HepG2 (cell line): ENCODE measurements at regions of chr17 and their contacts with region 1.

Region 1: DNA sequence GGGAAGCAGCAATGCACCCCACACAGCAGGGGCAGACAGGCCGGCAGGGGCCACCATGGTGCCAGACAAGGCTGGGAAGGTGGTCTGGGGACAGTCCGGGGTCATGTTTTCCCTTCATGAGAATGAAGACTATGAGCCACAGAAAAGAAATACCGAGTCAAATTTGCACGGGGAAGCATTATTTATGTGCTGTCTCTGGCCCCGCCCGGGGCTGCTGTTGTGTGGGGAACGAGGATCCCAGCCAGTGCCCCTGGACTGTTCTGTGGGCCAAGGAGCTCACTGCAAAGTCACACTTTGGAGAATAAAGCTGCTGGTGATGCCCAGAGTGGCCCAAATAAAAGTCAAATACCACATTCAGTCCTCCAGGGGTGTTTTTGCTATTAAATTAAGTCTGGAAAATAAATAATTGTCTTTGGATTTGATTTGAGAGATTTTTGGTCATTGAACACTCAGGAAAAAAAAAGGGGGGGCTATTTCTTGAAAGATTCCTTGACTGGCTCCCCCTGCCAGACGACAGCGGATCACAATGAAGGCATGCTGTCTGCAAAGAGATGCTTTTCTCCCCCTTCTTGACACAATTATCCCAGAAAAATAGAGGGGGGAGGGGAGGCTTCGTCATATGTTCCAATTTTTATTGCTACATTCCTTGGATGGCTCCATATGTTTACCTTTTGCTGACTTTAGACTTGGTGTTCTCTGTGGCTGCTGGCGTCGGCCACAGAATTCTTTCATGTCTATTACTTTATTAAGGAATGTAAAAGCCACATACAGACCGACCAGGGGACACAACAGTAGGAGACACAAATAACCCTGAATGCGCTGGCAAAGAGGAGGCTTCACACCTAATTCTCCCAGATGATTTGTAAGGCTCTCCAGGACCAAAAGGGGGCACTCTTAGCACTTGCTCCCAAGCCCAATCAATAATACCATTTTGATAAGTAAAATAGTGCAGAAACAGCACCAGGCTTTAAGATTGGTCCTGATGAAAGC is 27.1 kb upstream of the ANKFN1 start:
- DNase-seq: peak; percentile 27
- ATAC-seq: peak; percentile 64
- H3K4me3 ChIP-seq: no peak overlapping the region
- H3K27ac ChIP-seq: no peak overlapping the region
- H3K4me1 ChIP-seq: no peaks in the 10 kb centered on the region
- H3K27me3 ChIP-seq: 0 out of 5 replicates have a peak, but pooled peaks cover 0 to 4% of the 10 kb centered on the region in 2 experiments
- CTCF ChIP-seq: peak; percentile 53
- EP300 ChIP-seq: no peak
- POLR2A ChIP-seq: no peak
- RAD21 ChIP-seq: peak; percentile 31; the same call in 1 of the 2 replicates

Region 2: GRCh38 chr17:56173958-56174835 is 48.1 kb after region 1 on chr17:
- CTCF ChIA-PET with region 1: no interaction called
- POLR2A ChIA-PET with region 1: no interaction called
- in situ Hi-C with region 1: no loop called
- intact Hi-C with region 1: loop called (anchors 1 kb)
- DNase-seq: no peak
- ATAC-seq: no peak
- H3K4me3 ChIP-seq: no peak overlapping the region
- H3K27ac ChIP-seq: no peak overlapping the region
- H3K4me1 ChIP-seq: 0 out of 2 replicates have a peak, but pooled peaks cover 6% of the 10 kb centered on the region
- H3K27me3 ChIP-seq: no peaks in the 10 kb centered on the region
- CTCF ChIP-seq: no peak
- EP300 ChIP-seq: no peak
- POLR2A ChIP-seq: no peak
- RAD21 ChIP-seq: no peak

Region 3: GRCh38 chr17:56230660-56231059 is 104.5 kb after region 1 on chr17:
- CTCF ChIA-PET with region 1: no interaction called
- POLR2A ChIA-PET with region 1: no interaction called
- in situ Hi-C with region 1: no loop called
- intact Hi-C with region 1: no loop called
- DNase-seq: no peak
- ATAC-seq: no peak
- H3K4me3 ChIP-seq: no peak overlapping the region
- H3K27ac ChIP-seq: no peak overlapping the region
- H3K4me1 ChIP-seq: no peaks in the 10 kb centered on the region
- H3K27me3 ChIP-seq: 0 out of 5 replicates have a peak, but pooled peaks cover 0 to 2% of the 10 kb centered on the region in 2 experiments
- CTCF ChIP-seq: no peak
- EP300 ChIP-seq: no peak
- POLR2A ChIP-seq: no peak
- RAD21 ChIP-seq: no peak

Region 4: GRCh38 chr17:56319517-56319916 is 193.4 kb after region 1 on chr17:
- CTCF ChIA-PET with region 1: no interaction called
- POLR2A ChIA-PET with region 1: no interaction called
- in situ Hi-C with region 1: no loop called
- intact Hi-C with region 1: loop called (anchors 1 kb)
- DNase-seq: peak; percentile 58
- ATAC-seq: peak; percentile 86
- H3K4me3 ChIP-seq: no peak overlapping the region
- H3K27ac ChIP-seq: no peak overlapping the region
- H3K4me1 ChIP-seq: no peaks in the 10 kb centered on the region
- H3K27me3 ChIP-seq: peaks cover 0 to 5% of the 10 kb centered on the region in 2 experiments; a peak in 2 of 5 replicates
- CTCF ChIP-seq: peak; percentile 75
- EP300 ChIP-seq: no peak
- POLR2A ChIP-seq: no peak
- RAD21 ChIP-seq: 0 out of 2 replicates have a peak, but pooled peaks have one; percentile 30

Region 5: GRCh38 chr17:56478836-56479447 is 352.8 kb after region 1 on chr17:
- CTCF ChIA-PET with region 1: interaction called, 4 read pairs
- POLR2A ChIA-PET with region 1: no interaction called
- in situ Hi-C with region 1: no loop called
- intact Hi-C with region 1: loop called (anchors 1 kb)
- DNase-seq: peak; percentile 41
- ATAC-seq: peak; percentile 73
- H3K4me3 ChIP-seq: no peak overlapping the region
- H3K27ac ChIP-seq: no peak overlapping the region
- H3K4me1 ChIP-seq: no peaks in the 10 kb centered on the region
- H3K27me3 ChIP-seq: no peaks in the 10 kb centered on the region
- CTCF ChIP-seq: peak; percentile 59
- EP300 ChIP-seq: no peak
- POLR2A ChIP-seq: no peak
- RAD21 ChIP-seq: no peak